CD14-positive monocyte (primary cell): ENCODE measurements at regions of chr19 and their contacts with region 1.

Region 1: DNA sequence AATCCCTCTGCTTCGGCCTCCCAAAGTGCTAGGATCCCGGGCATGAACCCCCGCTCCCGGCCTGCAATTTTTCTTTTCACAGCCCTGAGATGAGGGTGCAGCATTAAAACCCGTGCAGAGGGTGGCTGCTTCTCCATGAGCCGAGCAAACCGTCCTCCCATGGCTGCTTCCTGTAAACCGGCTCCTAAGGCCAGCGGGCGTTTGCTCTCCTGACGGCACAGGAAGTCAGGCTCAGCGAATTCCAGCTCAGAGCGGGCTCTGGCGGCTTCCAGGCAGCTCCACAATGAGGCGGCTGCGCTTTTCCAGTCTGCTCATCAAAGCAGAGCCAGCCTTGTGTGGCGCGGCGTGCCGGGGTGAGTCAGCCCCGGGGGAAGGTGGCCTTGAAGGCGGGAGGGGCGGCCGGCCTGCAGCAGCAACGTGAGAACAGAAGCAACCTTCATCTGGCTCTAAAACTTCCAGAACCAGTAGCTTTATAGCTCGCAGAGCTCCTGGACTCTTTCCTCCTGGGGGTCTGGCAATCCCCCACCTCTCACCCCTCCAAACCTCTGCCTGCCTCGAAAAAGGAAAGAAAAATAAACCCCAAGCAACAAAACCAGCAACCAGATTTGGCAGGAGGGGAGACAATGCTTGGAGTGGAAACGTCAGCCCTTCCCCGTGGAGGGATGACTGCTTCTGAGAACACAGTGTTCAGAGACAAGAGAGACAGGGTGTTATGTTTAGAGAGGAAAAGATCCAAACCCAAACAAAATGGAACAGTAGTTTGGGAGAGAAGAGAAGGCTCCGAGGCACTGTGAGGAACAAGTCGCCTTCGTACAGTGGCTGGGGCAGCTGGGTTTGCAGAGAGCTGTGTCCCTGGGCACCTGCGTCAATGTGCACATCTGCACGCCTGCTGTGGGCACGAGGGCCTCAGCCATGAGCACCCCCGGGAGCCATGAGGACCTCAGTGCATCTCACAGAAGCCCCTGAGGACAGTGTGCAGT is 67.8 kb downstream of the GADD45B start:
- DNase-seq: peak; percentile 78 to 89 (median 88)
- H3K4me3 ChIP-seq: peak overlapping the region in 2 of 3 experiments; percentile 22 to 70
- H3K4me3 Mint-ChIP-seq: peak overlapping the region; percentile 73 to 88
- H3K27ac ChIP-seq: peak overlapping the region; percentile 27 to 68
- H3K27ac Mint-ChIP-seq: peak overlapping the region; percentile 55 to 88 (median 86)
- H3K4me1 ChIP-seq: peaks cover 35 to 37% of the 10 kb centered on the region in 2 donors
- H3K4me1 Mint-ChIP-seq: peaks cover 35% of the 10 kb centered on the region
- H3K27me3 ChIP-seq: no peaks in the 10 kb centered on the region
- H3K27me3 Mint-ChIP-seq: peaks cover 5 to 7% (median 5%) of the 10 kb centered on the region in 3 donors
- CTCF ChIP-seq: no peak

Region 2: GRCh38 chr19:2507109-2507508 is 36.6 kb before region 1 on chr19:
- intact Hi-C with region 1: loop called in 1 of 2 experiments (anchors 5 kb)
- DNase-seq: peak; percentile 72 to 76 (median 73)
- H3K4me3 ChIP-seq: peak overlapping the region in 1 of 3 experiments; percentile 48
- H3K4me3 Mint-ChIP-seq: peak overlapping the region; percentile 52 to 72
- H3K27ac ChIP-seq: peak overlapping the region; percentile 23 to 73
- H3K27ac Mint-ChIP-seq: peak overlapping the region; percentile 63 to 92 (median 79)
- H3K4me1 ChIP-seq: peaks cover 29 to 31% of the 10 kb centered on the region in 2 donors
- H3K4me1 Mint-ChIP-seq: peaks cover 32% of the 10 kb centered on the region
- H3K27me3 ChIP-seq: no peaks in the 10 kb centered on the region
- H3K27me3 Mint-ChIP-seq: peaks cover 2 to 6% (median 6%) of the 10 kb centered on the region in 3 donors
- CTCF ChIP-seq: no peak

Region 3: GRCh38 chr19:2610637-2611482 is 67.1 kb after region 1 on chr19:
- intact Hi-C with region 1: loop called in 1 of 2 experiments (anchors 5 kb)
- DNase-seq: peak; percentile 67 to 83 (median 81)
- H3K4me3 ChIP-seq: peak overlapping the region; percentile 36 to 81 (median 71)
- H3K4me3 Mint-ChIP-seq: peak overlapping the region; percentile 88 to 95
- H3K27ac ChIP-seq: peak overlapping the region in 1 of 2 donors; percentile 62
- H3K27ac Mint-ChIP-seq: peak overlapping the region in 6 of 7 donors; percentile 53 to 90 (median 77)
- H3K4me1 ChIP-seq: peaks cover 29 to 42% of the 10 kb centered on the region in 2 donors
- H3K4me1 Mint-ChIP-seq: peaks cover 36% of the 10 kb centered on the region
- H3K27me3 ChIP-seq: no peaks in the 10 kb centered on the region
- H3K27me3 Mint-ChIP-seq: peaks cover 2 to 4% (median 2%) of the 10 kb centered on the region in 3 donors
- CTCF ChIP-seq: peak; percentile 96

Region 4: DNA sequence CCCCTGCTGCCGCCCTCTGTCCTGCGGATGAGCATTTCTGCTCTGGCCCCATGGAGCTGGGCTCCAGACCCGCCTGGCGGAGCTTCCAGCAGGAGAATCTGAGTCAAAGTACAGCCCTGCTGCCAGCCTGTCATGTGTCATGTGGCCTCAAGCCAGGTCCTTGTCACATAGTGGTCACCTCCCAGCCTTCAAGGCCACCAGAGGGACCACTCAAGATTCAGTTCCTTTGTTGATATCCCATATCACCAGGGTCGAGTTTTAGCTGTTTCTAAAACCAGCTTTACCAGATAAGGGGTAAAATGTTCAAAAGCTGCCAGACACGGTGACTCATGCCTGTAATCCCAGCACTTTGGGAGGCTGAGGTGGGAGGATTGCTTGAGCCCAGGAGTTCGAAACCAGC is 255.0 kb after region 1 on chr19:
- intact Hi-C with region 1: no loop called
- DNase-seq: no peak
- H3K4me3 ChIP-seq: no peak overlapping the region
- H3K4me3 Mint-ChIP-seq: no peak overlapping the region
- H3K27ac ChIP-seq: no peak overlapping the region
- H3K27ac Mint-ChIP-seq: peak overlapping the region in 2 of 7 donors; percentile 21 to 36
- H3K4me1 ChIP-seq: no peaks in the 10 kb centered on the region
- H3K4me1 Mint-ChIP-seq: no peaks in the 10 kb centered on the region
- H3K27me3 ChIP-seq: no peaks in the 10 kb centered on the region
- H3K27me3 Mint-ChIP-seq: peaks cover 0 to 4% (median 0%) of the 10 kb centered on the region in 3 donors
- CTCF ChIP-seq: no peak